PC-9 (cell line): ENCODE measurements at regions of chr15 and their contacts with region 1.

Region 1: GRCh38 chr15:50424066-50424890 is at the start of gene USP8:
- DNase-seq: peak; percentile 87 to 98
- H3K4me3 ChIP-seq: peak within 1 kb of the TSS; percentile 85
- H3K27ac ChIP-seq: peak within 1 kb of the TSS; percentile 88
- H3K4me1 ChIP-seq: 0 out of 2 replicates have a peak, but pooled peaks cover 15% of the 10 kb centered on the region
- H3K27me3 ChIP-seq: no peaks in the 10 kb centered on the region
- CTCF ChIP-seq: no peak
- total RNA-seq, gene USP8: 64.6 and 70.7 TPM in 2 replicates

Region 2: DNA sequence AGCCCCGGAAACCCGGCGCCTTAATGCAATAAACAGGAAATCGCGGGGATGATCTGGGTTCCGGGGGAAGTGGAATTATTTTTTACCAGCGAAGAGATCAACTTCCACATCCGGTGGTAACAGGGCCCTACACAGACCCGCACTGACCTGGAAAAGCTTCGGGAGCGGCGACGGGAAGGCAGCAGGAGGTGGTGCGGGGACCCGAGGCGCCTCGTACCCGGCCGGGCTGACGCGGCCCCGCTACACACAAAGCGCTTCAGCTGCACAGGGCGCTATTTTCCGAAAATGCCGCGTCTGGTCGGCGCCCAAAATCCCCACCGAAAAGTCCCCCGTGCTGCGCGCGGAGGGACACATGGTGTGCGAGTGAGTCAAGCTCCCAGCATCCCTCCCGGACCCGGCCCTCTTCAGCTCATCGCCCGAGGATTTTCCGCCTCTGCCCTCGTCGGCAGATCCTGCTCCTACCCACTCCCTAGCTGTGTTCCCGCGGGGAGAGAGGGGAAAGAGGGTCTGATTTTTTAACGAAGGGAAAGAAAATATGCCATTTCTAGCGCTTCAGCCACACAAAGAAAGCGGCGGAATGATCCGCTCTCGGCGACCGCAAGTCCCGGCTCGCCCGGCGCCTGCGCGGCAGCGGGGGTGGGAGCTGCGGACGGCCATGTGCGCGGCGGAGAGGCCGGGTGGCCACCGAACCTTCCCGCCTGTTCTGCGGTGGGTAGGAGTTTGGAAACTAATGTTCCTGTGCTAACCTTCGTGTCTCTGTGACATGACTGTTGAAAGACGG is 69.2 kb before region 1 on chr15 and contains the start of gene GABPB1:
- CTCF ChIA-PET with region 1: interaction called, 4 read pairs
- POLR2A ChIA-PET with region 1: interaction called, 34 read pairs
- intact Hi-C with region 1: loop called (anchors 1 kb)
- DNase-seq: peak; percentile 54 to 85
- H3K4me3 ChIP-seq: peak within 1 kb of the TSS; percentile 76
- H3K27ac ChIP-seq: peak within 1 kb of the TSS; percentile 96
- H3K4me1 ChIP-seq: peaks cover 30% of the 10 kb centered on the region
- H3K27me3 ChIP-seq: no peaks in the 10 kb centered on the region
- CTCF ChIP-seq: no peak
- total RNA-seq, gene GABPB1: 21.7 and 22.0 TPM in 2 replicates

Region 3: GRCh38 chr15:50390554-50391287 is 33.6 kb before region 1 on chr15:
- CTCF ChIA-PET with region 1: interaction called, 11 read pairs
- POLR2A ChIA-PET with region 1: interaction called, 6 read pairs
- intact Hi-C with region 1: loop called (anchors 1 kb)
- DNase-seq: peak; percentile 37 to 67
- H3K4me3 ChIP-seq: no peak overlapping the region
- H3K27ac ChIP-seq: peak overlapping the region; percentile 69
- H3K4me1 ChIP-seq: peaks cover 19% of the 10 kb centered on the region
- H3K27me3 ChIP-seq: no peaks in the 10 kb centered on the region
- CTCF ChIP-seq: no peak

Region 4: GRCh38 chr15:50463423-50464358 is 39.4 kb after region 1 on chr15:
- CTCF ChIA-PET with region 1: no interaction called
- POLR2A ChIA-PET with region 1: interaction called, 12 read pairs
- intact Hi-C with region 1: no loop called
- DNase-seq: no peak
- H3K4me3 ChIP-seq: no peak overlapping the region
- H3K27ac ChIP-seq: no peak overlapping the region
- H3K4me1 ChIP-seq: no peaks in the 10 kb centered on the region
- H3K27me3 ChIP-seq: no peaks in the 10 kb centered on the region
- CTCF ChIP-seq: no peak

Region 5: GRCh38 chr15:51088585-51088984 is 664.3 kb after region 1 on chr15:
- CTCF ChIA-PET with region 1: no interaction called
- POLR2A ChIA-PET with region 1: interaction called, 10 read pairs
- intact Hi-C with region 1: no loop called
- DNase-seq: no peak
- H3K4me3 ChIP-seq: no peak overlapping the region
- H3K27ac ChIP-seq: no peak overlapping the region
- H3K4me1 ChIP-seq: no peaks in the 10 kb centered on the region
- H3K27me3 ChIP-seq: no peaks in the 10 kb centered on the region
- CTCF ChIP-seq: no peak